A673 (cell line): ENCODE measurements at regions of chr12 and their contacts with region 1.

Region 1: GRCh38 chr12:60191271-60191670 is 595.4 kb downstream of the SLC16A7 start:
- DNase-seq: no peak
- H3K4me3 ChIP-seq: no peak overlapping the region
- H3K27ac ChIP-seq: no peak overlapping the region
- H3K4me1 ChIP-seq: no peaks in the 10 kb centered on the region
- H3K27me3 ChIP-seq: no peaks in the 10 kb centered on the region
- CTCF ChIP-seq: no peak

Region 2: GRCh38 chr12:59142175-59142790 is 1049.0 kb before region 1 on chr12:
- CTCF ChIA-PET with region 1: no interaction called
- POLR2A ChIA-PET with region 1: no interaction called
- intact Hi-C with region 1: no loop called
- DNase-seq: no peak
- H3K4me3 ChIP-seq: no peak overlapping the region
- H3K27ac ChIP-seq: no peak overlapping the region
- H3K4me1 ChIP-seq: no peaks in the 10 kb centered on the region
- H3K27me3 ChIP-seq: no peaks in the 10 kb centered on the region
- CTCF ChIP-seq: no peak

Region 3: GRCh38 chr12:59963546-59963945 is 227.7 kb before region 1 on chr12:
- CTCF ChIA-PET with region 1: no interaction called
- POLR2A ChIA-PET with region 1: interaction called, 15 read pairs
- intact Hi-C with region 1: no loop called
- DNase-seq: no peak
- H3K4me3 ChIP-seq: no peak overlapping the region
- H3K27ac ChIP-seq: no peak overlapping the region
- H3K4me1 ChIP-seq: no peaks in the 10 kb centered on the region
- H3K27me3 ChIP-seq: no peaks in the 10 kb centered on the region
- CTCF ChIP-seq: no peak

Region 4: GRCh38 chr12:60144395-60144794 is 46.9 kb before region 1 on chr12:
- CTCF ChIA-PET with region 1: no interaction called
- POLR2A ChIA-PET with region 1: no interaction called
- intact Hi-C with region 1: no loop called
- DNase-seq: no peak
- H3K4me3 ChIP-seq: no peak overlapping the region
- H3K27ac ChIP-seq: no peak overlapping the region
- H3K4me1 ChIP-seq: no peaks in the 10 kb centered on the region
- H3K27me3 ChIP-seq: no peaks in the 10 kb centered on the region
- CTCF ChIP-seq: no peak

Region 5: DNA sequence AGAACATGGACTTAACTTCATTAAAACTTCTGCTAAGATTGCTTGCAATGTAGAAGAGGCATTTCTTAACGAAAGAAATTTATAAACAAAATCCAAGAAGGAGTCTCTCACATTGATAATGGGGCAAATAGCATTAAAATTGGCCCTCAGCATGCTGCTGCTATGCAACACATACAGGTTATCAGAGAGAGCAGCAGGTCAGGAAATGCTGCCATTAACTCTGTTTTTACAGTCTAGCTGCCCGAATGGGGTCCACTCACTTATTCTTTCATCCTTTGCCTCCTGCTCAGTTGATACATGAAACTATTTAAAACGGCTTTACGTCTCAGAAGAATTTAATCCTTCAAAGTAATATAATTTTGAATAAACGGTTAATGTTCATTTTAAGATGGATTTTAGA is 25.0 kb after region 1 on chr12:
- CTCF ChIA-PET with region 1: no interaction called
- POLR2A ChIA-PET with region 1: no interaction called
- intact Hi-C with region 1: no loop called
- DNase-seq: no peak
- H3K4me3 ChIP-seq: no peak overlapping the region
- H3K27ac ChIP-seq: no peak overlapping the region
- H3K4me1 ChIP-seq: no peaks in the 10 kb centered on the region
- H3K27me3 ChIP-seq: no peaks in the 10 kb centered on the region
- CTCF ChIP-seq: no peak